ENCODE measurements at regions of chr2 and their contacts with region 1.

Region 1: GRCh38 chr2:66574701-66575624 is 140.0 kb downstream of the MEIS1 start:
- DNase-seq: peak; percentile 60
- ATAC-seq: peak; percentile 82

Region 2: DNA sequence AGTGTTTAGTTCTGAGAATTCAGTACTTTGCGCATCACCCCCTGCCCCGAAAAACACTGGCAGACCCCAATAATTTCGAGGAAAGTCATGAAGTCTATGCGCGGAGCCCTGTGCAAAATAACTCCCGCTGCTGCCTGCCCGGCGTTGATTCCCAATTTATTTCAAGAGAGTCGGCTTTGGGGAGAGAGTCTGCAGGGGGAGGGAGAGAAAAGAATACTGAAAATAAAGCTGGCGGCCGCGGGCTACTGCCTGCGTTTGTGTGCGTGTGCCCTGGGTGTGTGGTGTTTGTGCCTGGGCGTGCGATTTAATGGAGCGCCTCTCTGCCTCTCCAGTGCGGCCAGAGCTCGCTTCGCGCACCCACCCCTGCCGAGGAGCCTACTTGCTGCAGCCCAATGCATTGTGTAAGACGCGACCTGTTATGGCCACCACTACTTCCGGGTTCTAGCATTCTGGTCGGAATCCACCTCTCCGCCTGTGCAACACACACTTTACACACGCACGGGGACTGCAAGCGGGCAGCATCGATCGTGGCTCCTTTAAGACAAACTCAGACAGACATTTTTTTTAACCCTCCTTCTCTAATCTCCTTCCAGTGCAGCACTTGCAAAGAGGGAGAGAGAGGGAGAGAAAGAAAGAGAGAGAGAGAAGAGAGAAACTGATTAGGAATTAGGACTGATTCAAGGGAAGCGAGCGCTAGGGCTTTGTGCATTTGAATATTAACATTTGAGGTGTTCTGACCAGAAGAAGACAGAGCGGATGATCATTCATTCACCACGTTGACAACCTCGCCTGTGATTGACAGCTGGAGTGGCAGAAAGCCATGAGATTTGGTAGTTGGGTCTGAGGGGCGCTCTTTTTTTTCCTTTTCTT is 140.0 kb before region 1 on chr2 and contains the start of gene MEIS1:
- intact Hi-C with region 1: loop called (anchors 5 kb)
- DNase-seq: peak; percentile 94
- ATAC-seq: peak; percentile 85
- total RNA-seq, gene MEIS1: 41.7 TPM

Region 3: GRCh38 chr2:66633631-66634030 is 58.7 kb after region 1 on chr2:
- intact Hi-C with region 1: no loop called
- DNase-seq: no peak
- ATAC-seq: no peak